ENCODE measurements at regions of chr9 and their contacts with region 1.

Region 1: GRCh38 chr9:19999491-20000057 is 210.7 kb upstream of the SLC24A2 start:
- DNase-seq: peak; percentile 62
- H3K4me3 Mint-ChIP-seq: peak overlapping the region; percentile 63
- H3K27ac Mint-ChIP-seq: peak overlapping the region; percentile 99
- H3K4me1 Mint-ChIP-seq: peaks cover 66% of the 10 kb centered on the region
- H3K27me3 Mint-ChIP-seq: no peaks in the 10 kb centered on the region

Region 2: DNA sequence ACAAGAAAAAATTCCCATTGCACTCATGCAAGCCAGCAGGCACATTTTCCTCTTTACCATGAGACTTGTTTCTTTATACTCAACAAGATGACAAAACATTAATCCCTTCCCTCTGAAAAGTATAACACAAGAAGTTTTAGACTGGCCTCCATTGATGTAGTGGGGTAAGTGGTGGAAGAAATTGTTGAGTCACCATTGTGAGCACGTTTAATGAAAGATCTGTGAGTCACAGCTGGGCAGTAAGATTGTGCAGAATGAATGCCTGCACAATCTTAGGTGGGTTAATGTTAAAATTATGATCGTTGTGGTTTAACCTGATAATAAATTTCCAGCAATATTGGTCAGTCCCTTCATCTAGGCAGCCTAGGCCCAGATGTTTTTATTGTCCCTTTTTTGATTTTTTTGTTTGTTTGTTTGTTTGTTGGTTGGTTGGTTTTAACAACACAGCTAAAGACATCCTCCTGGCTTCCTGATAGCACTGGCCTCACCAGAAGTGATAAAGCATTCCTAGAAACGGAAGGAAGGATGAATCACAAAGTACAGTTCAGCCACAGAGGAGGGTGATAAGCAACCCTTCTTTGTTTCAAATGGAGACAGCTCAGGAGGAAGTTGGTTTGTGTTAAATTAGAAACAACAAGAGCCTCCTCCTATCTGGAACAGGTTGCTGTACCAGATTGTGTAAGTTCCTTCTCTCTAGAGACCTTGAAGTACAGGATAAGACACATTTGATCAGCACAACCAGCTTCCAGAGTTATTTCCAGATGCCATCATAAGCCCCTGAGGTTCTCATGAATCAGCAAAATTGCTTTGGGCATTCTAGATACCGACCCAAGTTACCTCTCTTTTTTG is 251.1 kb before region 1 on chr9:
- intact Hi-C with region 1: loop called (anchors 10 kb)
- DNase-seq: peak; percentile 9
- H3K4me3 Mint-ChIP-seq: no peak overlapping the region
- H3K27ac Mint-ChIP-seq: no peak overlapping the region
- H3K4me1 Mint-ChIP-seq: peaks cover 22% of the 10 kb centered on the region
- H3K27me3 Mint-ChIP-seq: peaks cover 14% of the 10 kb centered on the region

Region 3: DNA sequence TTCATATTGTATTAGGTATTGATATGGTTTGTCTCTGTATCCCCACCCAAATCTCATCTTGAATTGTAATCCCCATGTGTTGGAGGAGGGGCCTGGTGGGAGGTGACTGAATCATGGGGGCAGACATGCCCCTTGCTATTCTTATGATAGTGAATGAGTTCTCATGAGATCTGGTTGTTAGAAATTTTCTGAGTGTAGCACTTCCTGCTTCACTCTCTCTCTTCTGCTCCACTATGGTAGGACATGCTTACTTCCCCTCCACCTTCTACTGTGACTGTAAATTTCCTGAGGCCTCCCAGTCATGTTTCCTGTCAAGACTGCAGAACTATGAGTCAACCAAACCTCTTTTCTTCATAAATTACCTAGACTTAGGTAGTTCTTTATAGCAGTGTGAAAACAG is 23.3 kb before region 1 on chr9:
- intact Hi-C with region 1: loop called (anchors 1 kb)
- DNase-seq: peak; percentile 47
- H3K4me3 Mint-ChIP-seq: peak overlapping the region; percentile 1
- H3K27ac Mint-ChIP-seq: peak overlapping the region; percentile 92
- H3K4me1 Mint-ChIP-seq: peaks cover 51% of the 10 kb centered on the region
- H3K27me3 Mint-ChIP-seq: no peaks in the 10 kb centered on the region

Region 4: GRCh38 chr9:20242510-20243189 is 243.1 kb after region 1 on chr9:
- intact Hi-C with region 1: loop called (anchors 1 kb)
- DNase-seq: peak; percentile 36
- H3K4me3 Mint-ChIP-seq: peak overlapping the region; percentile 36
- H3K27ac Mint-ChIP-seq: peak overlapping the region; percentile 27
- H3K4me1 Mint-ChIP-seq: peaks cover 65% of the 10 kb centered on the region
- H3K27me3 Mint-ChIP-seq: peaks cover 2% of the 10 kb centered on the region

Region 5: DNA sequence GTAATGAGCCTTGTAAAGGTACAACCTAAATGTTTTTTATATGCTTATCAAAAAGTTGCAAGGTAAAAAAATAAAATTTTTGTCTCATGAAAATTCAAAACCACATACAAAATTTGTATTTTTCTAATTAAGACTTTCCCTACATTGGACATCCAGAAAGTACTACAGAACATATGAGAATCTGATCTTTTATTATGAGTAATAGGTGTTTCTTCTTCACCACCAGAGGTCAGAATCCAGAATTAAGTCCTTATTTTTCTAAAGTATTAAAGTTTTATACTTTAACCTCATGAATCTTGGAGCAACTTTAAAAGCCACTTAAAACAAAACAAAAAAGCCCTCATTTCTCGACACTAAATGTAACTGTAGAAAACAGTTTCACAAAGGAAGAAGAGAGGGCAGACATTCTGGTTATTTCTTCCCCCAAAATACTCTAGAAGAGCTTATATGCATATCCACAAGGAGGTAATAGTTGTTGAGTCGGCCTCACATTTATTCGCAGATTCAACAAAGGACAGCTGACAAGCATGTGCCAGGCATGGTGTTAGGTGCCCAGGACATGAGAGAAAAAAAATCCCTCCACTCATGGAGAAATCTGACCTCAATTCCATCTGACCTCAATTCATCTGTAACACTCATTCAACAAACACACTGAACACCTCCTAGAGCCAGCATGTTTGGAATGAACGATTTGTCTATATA is 553.5 kb after region 1 on chr9:
- intact Hi-C with region 1: loop called (anchors 1 kb)
- DNase-seq: peak; percentile 1
- H3K4me3 Mint-ChIP-seq: peak overlapping the region; percentile 59
- H3K27ac Mint-ChIP-seq: peak overlapping the region; percentile 64
- H3K4me1 Mint-ChIP-seq: peaks cover 76% of the 10 kb centered on the region
- H3K27me3 Mint-ChIP-seq: no peaks in the 10 kb centered on the region

Region 6: GRCh38 chr9:21031091-21031807 is 1031.7 kb after region 1 on chr9 and contains the start of gene HACD4:
- intact Hi-C with region 1: loop called (anchors 1 kb)
- DNase-seq: peak; percentile 67
- H3K4me3 Mint-ChIP-seq: peak within 1 kb of the TSS; percentile 63
- H3K27ac Mint-ChIP-seq: peak within 1 kb of the TSS; percentile 27
- H3K4me1 Mint-ChIP-seq: peaks cover 23% of the 10 kb centered on the region
- H3K27me3 Mint-ChIP-seq: no peaks in the 10 kb centered on the region
- total RNA-seq, gene HACD4: 2.7 and 3.0 TPM in 2 replicates